ENCODE measurements at regions of chr16 and their contacts with region 1.

Region 1: DNA sequence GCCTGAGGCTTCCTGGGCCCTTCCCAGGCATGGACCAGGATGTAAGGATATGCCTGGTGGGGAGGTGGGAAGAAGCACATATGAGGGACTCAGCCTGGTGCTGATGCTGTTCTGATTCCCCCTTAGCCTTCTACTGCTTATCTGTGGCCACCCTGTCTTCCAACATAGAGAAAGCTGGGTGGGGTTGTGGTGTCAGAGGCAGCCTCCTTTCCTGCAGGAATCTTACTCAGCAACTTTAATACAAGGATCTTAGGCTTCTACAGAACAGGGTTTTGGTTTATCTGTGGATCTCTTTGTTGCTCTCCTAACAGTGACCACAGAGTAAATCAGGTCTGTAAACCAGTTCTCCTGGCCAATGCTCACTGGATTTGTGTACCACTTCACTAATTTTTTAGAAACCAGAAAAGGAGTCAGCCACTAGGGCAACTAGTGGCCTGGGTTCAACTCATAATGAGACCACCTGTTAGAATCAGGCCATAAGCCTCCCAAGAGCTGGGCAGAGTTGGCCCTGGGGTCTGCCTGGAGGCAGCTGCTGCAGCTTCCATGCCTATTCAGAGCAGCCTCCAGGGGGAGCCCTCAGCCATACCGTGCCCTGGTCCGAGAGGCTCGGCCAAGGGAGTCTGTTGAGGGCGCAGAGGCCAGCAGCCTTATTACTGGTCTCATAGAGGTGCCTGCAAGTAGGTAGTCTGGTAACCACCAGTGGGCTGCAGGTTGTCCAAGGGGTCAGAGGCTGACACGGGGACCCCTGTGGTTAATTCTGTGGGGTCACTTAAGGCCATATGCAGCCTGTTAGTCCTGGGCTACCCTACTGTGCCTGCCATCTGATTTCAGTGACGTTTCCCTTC is 7.1 kb downstream of the HAS3 start:
- DNase-seq: peak in 2 of 4 donors; percentile 61 to 85
- ATAC-seq: peak; percentile 70
- H3K4me3 ChIP-seq: no peak overlapping the region
- H3K27ac ChIP-seq: no peak overlapping the region
- H3K4me1 ChIP-seq: peaks cover 2 to 14% of the 10 kb centered on the region in 2 donors
- H3K27me3 ChIP-seq: peaks cover 0 to 14% of the 10 kb centered on the region in 2 donors
- CTCF ChIP-seq: peak; percentile 59 to 83

Region 2: GRCh38 chr16:68893710-68894705 is 218.5 kb before region 1 on chr16:
- intact Hi-C with region 1: loop called in 1 of 2 experiments (anchors 10 kb)
- DNase-seq: peak in 1 of 4 donors; percentile 58
- ATAC-seq: peak; percentile 35
- H3K4me3 ChIP-seq: no peak overlapping the region
- H3K27ac ChIP-seq: no peak overlapping the region
- H3K4me1 ChIP-seq: peaks cover 0 to 11% of the 10 kb centered on the region in 2 donors
- H3K27me3 ChIP-seq: no peaks in the 10 kb centered on the region
- CTCF ChIP-seq: no peak

Region 3: GRCh38 chr16:69157196-69157595 is 44.7 kb after region 1 on chr16:
- intact Hi-C with region 1: no loop called
- DNase-seq: no peak
- ATAC-seq: no peak
- H3K4me3 ChIP-seq: no peak overlapping the region
- H3K27ac ChIP-seq: no peak overlapping the region
- H3K4me1 ChIP-seq: no peaks in the 10 kb centered on the region
- H3K27me3 ChIP-seq: no peaks in the 10 kb centered on the region
- CTCF ChIP-seq: no peak

Region 4: DNA sequence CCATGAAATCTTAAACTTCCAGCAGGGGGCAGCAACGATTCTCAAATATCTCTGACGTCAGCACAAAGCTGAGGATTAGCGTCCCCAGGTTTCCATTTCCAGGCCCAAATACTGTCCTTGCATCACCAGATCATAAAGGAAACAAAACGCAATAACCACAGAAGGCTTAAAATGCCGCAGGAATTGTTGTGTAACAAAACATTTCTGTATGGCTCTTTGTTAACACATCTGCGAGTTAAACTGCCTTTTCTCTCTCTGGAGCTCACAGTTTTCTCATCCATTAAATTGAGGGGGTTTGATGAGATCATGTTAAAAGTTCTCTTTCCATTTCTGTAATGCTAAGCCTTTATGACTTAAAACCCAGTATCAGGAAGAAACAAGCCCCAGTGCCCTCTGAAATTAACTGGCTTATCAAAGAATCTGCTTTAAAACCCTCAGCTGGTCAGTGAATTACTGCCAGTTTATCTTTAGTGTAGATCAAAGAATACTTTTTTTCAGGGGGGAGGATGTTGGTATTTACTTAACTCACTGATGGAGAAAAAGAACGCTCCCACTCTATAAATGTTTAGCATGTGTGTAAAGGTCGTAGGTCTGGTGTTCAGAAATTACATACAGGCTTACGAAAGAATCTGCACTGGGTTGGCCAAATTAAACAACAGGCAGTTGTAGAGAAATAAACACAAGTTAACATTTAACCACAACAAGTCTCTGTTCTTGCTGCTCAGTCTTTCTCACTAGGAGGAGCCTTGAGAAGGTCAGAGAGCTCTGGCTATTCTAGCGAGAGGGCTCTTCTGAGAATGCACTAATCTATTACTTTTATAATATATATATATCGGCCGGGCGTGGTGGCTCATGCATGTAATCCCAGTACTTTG is 283.9 kb after region 1 on chr16:
- intact Hi-C with region 1: no loop called
- DNase-seq: peak in 3 of 4 donors; percentile 63 to 93 (median 87)
- ATAC-seq: peak; percentile 88
- H3K4me3 ChIP-seq: no peak overlapping the region
- H3K27ac ChIP-seq: peak overlapping the region; percentile 81 to 84
- H3K4me1 ChIP-seq: peaks cover 21 to 40% of the 10 kb centered on the region in 2 donors
- H3K27me3 ChIP-seq: no peaks in the 10 kb centered on the region
- CTCF ChIP-seq: peak; percentile 3 to 5